Sigmoid colon (tissue), 7 donors: ENCODE measurements at regions of chr2 and their contacts with region 1.

Region 1: GRCh38 chr2:130181325-130181879 is at the start of gene SMPD4:
- DNase-seq: peak; percentile 98
- H3K4me3 ChIP-seq: peak within 1 kb of the TSS; percentile 71 to 91 (median 80)
- H3K27ac ChIP-seq: peak within 1 kb of the TSS; percentile 91 to 97 (median 94)
- H3K4me1 ChIP-seq: peaks cover 0 to 30% (median 25%) of the 10 kb centered on the region in 4 donors
- H3K27me3 ChIP-seq: no peaks in the 10 kb centered on the region
- CTCF ChIP-seq: no peak
- EP300 ChIP-seq: no peak
- POLR2A ChIP-seq: peak in 1 of 2 donors; percentile 7
- total RNA-seq, gene SMPD4: 18.1 to 47.9 (median 26.2) TPM

Region 2: DNA sequence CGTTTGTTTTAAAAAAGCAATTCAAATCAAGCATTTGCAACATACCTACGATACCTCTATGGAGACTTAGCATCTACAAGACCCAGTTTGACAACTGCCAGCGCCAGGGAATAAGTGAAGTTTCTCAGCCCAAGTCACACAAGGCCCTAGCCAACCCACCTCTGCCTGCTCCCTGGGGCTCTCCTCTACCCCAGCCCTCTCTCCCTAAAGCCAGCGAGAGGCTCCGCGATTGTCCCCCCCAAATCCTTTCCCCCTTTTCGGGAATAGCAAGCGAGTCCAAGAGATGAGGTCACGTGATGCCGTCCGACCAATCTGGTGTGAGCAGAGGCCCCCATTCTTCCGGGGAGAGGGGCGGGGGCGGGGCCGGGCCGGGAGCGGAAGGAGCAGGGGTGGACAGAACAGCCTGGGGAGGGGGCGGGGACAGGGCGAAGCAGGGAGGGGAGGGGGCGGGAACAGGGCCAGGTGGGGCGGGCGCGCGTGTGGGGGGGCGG is 304.1 kb before region 1 on chr2:
- intact Hi-C with region 1: loop called (anchors 5 kb)
- DNase-seq: peak; percentile 96
- H3K4me3 ChIP-seq: peak overlapping the region; percentile 69 to 77 (median 71)
- H3K27ac ChIP-seq: peak overlapping the region; percentile 82 to 91 (median 85)
- H3K4me1 ChIP-seq: peaks cover 0 to 16% (median 10%) of the 10 kb centered on the region in 4 donors
- H3K27me3 ChIP-seq: no peaks in the 10 kb centered on the region
- CTCF ChIP-seq: no peak
- EP300 ChIP-seq: no peak
- POLR2A ChIP-seq: no peak

Region 3: GRCh38 chr2:130332271-130333073 is 151.1 kb after region 1 on chr2:
- intact Hi-C with region 1: loop called (anchors 2 kb)
- DNase-seq: peak; percentile 88
- H3K4me3 ChIP-seq: peak overlapping the region in 2 of 4 donors; percentile 13 to 15
- H3K27ac ChIP-seq: no peak overlapping the region
- H3K4me1 ChIP-seq: peaks cover 0 to 12% (median 2%) of the 10 kb centered on the region in 4 donors
- H3K27me3 ChIP-seq: no peaks in the 10 kb centered on the region
- CTCF ChIP-seq: peak; percentile 70 to 88 (median 85)
- EP300 ChIP-seq: no peak
- POLR2A ChIP-seq: no peak

Region 4: GRCh38 chr2:130372055-130372832 is 190.8 kb after region 1 on chr2:
- intact Hi-C with region 1: loop called (anchors 5 kb)
- DNase-seq: peak; percentile 93
- H3K4me3 ChIP-seq: peak overlapping the region; percentile 59 to 97 (median 79)
- H3K27ac ChIP-seq: peak overlapping the region; percentile 82 to 95 (median 88)
- H3K4me1 ChIP-seq: peaks cover 0 to 33% (median 27%) of the 10 kb centered on the region in 4 donors
- H3K27me3 ChIP-seq: no peaks in the 10 kb centered on the region
- CTCF ChIP-seq: peak; percentile 92 to 94 (median 94)
- EP300 ChIP-seq: peak in 1 of 4 donors; percentile 13
- POLR2A ChIP-seq: peak; percentile 13 to 42

Region 5: DNA sequence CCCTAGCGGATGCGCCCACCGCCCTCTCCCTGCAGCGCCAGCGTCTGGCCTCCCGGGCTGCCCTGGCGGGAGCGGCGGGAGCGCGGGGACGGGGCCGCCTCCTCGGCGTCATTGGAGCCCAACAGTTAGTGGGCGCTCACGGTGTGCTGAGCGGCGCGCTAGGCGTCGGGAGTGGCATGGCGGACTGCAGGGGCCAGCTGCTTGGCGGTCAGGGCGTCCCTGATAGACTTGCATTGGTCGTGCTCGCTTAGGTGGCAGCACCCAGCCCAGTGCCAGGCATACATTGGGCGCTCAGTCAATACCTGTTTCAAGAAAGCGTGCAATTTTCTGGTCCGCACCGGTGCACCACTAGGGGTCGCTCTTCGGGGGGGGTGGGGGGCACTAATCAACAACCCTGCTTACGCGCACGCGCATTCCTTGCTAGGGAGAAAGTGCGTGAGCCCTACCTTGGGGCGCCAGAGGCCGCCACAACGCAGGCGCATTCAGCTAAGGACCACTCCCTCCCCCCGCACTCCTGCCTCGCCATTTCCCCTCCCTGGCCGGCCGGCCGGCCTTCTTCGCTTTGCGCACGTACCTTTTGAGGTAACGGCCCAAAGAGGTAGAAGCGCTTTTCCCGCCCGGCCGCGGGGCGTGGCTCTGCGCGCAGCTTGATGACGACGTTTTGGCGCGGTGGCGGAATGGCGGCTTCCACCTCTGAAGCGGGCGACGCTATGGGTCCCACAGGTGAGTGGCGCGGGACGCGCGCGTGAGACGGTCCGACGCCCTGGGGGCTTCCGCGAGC is 1311.2 kb after region 1 on chr2:
- intact Hi-C with region 1: loop called (anchors 10 kb)
- DNase-seq: peak; percentile 94
- H3K4me3 ChIP-seq: peak overlapping the region; percentile 71 to 81 (median 78)
- H3K27ac ChIP-seq: peak overlapping the region; percentile 83 to 88 (median 84)
- H3K4me1 ChIP-seq: peaks cover 0 to 30% (median 20%) of the 10 kb centered on the region in 4 donors
- H3K27me3 ChIP-seq: no peaks in the 10 kb centered on the region
- CTCF ChIP-seq: peak; percentile 65 to 84 (median 69)
- EP300 ChIP-seq: no peak
- POLR2A ChIP-seq: no peak